Right ventricle myocardium superior (tissue), 1 donor: ENCODE measurements at regions of chr15 and their contacts with region 1.

Region 1: GRCh38 chr15:85831415-85832113 is 36.8 kb upstream of the KLHL25 start:
- DNase-seq: peak; percentile 69
- ATAC-seq: peak; percentile 95

Region 2: DNA sequence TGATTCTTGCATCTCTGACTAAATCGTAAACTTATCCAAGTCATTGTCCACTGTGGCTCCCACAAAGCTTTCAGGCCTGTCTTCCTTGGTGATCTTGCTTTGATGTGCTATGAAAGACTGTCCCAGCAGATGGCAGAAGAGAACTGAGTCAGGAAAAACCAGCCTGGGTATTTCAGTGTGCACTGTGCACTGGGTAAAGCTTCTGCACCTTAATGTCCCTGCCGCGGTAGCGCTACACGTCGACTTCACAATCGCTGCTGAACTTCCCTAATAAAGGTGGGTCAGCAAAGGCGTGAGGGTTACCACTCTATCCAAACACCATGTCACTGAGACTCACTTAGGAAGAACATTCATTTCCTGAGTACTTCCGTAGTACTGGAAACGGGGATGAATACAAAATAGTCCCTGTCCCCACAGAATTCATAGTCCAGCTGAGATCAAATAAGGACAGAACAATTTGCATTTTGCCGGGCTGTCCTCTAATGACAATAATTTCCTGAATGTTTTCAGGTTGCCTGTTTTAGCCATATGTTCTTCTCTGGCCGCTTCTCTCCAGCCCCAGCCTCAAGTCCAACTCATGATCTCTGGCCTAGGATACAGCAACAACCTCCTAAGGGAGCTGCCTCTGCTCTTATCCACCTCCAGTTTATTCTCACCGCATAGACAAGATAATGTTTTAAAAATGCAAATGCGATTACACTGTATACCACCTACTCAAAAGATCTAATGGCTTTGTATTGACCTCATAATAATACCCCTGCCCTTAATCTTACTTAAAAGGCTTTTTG is 534.8 kb before region 1 on chr15:
- intact Hi-C with region 1: loop called (anchors 10 kb)
- DNase-seq: peak; percentile 47
- ATAC-seq: peak; percentile 95